ENCODE measurements at regions of chr1 and their contacts with region 1.

Region 1: DNA sequence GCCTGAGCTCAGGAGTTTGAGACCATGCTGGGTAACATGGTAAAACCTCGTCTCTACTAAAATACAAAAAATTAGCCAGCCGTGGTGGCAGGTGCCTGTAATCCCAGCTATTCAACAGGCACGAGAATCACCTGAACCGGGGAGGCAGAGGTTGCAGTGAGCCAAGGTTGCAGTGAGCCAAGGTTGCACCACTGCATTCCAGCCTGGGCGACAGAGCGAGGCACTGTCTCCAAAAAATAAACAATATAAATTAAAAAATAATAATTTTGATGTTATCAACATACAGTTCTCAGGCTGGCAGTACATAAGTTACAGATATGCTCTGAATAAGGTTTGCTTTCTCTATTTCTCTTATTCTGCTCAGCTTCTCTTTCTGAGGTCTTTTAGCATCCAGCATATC is 27.6 kb downstream of the GON4L start:
- DNase-seq: no peak
- ATAC-seq: no peak
- H3K4me3 ChIP-seq: no peak overlapping the region
- H3K27ac ChIP-seq: no peak overlapping the region
- H3K4me1 ChIP-seq: peaks cover under 1% of the 10 kb centered on the region; the same call in 1 of the 2 replicates
- H3K27me3 ChIP-seq: no peaks in the 10 kb centered on the region
- CTCF ChIP-seq: no peak
- POLR2A ChIP-seq: no peak
- RAD21 ChIP-seq: no peak

Region 2: GRCh38 chr1:155562581-155563376 is 266.6 kb before region 1 on chr1 and contains the start of gene ASH1L:
- CTCF ChIA-PET with region 1: no interaction called
- POLR2A ChIA-PET with region 1: no interaction called
- dilution Hi-C with region 1: no loop called
- in situ Hi-C with region 1: no loop called
- intact Hi-C with region 1: no loop called
- DNase-seq: peak; percentile 87
- ATAC-seq: peak; percentile 87
- H3K4me3 ChIP-seq: peak within 1 kb of the TSS; percentile 93
- H3K27ac ChIP-seq: peak within 1 kb of the TSS; percentile 100
- H3K4me1 ChIP-seq: peaks cover 2% of the 10 kb centered on the region; the same call in 1 of the 2 replicates
- H3K27me3 ChIP-seq: no peaks in the 10 kb centered on the region
- CTCF ChIP-seq: no peak; the same call in 1 of the 2 replicates
- POLR2A ChIP-seq: peak; percentile 98
- RAD21 ChIP-seq: peak; percentile 15; the same call in 1 of the 2 replicates
- total RNA-seq, gene ASH1L: 18.5 and 23.9 TPM in 2 replicates

Region 3: DNA sequence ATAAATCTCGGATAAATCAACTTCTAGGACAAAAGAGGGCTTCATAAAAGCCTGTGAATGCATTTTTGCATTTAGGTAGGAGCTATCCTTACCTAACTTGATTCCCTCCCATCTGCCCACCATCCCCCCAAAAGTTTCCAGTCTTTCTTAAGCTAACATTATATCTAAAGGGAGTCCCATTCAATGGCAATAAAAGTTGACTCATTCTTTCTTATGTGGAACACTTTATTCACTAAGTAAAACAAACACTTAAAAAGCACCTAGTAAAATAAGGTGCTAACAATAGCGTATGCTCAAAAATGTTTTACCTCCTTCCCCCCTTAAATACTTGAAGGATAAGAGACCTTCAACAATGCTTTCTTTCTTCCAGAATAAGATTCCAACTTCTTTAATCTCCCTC is 56.2 kb before region 1 on chr1:
- CTCF ChIA-PET with region 1: no interaction called
- POLR2A ChIA-PET with region 1: no interaction called
- dilution Hi-C with region 1: no loop called
- in situ Hi-C with region 1: no loop called
- intact Hi-C with region 1: loop called (anchors 5 kb)
- DNase-seq: no peak
- ATAC-seq: no peak
- H3K4me3 ChIP-seq: no peak overlapping the region
- H3K27ac ChIP-seq: no peak overlapping the region
- H3K4me1 ChIP-seq: no peaks in the 10 kb centered on the region
- H3K27me3 ChIP-seq: no peaks in the 10 kb centered on the region
- CTCF ChIP-seq: no peak
- POLR2A ChIP-seq: no peak
- RAD21 ChIP-seq: no peak